ENCODE measurements at regions of chr15 and their contacts with region 1.

Region 1: GRCh38 chr15:92917606-92918407 is 17.7 kb downstream of the CHD2 start:
- DNase-seq: peak; percentile 99
- ATAC-seq: peak; percentile 34
- H3K4me3 Mint-ChIP-seq: no peak overlapping the region
- H3K27ac Mint-ChIP-seq: peak overlapping the region; percentile 87
- H3K4me1 Mint-ChIP-seq: peaks cover 78% of the 10 kb centered on the region
- H3K27me3 Mint-ChIP-seq: no peaks in the 10 kb centered on the region
- CTCF ChIP-seq: peak; percentile 91

Region 2: GRCh38 chr15:92820236-92821021 is 97.4 kb before region 1 on chr15:
- CTCF ChIA-PET with region 1: interaction called, 10 read pairs
- POLR2A ChIA-PET with region 1: interaction called, 3 read pairs
- intact Hi-C with region 1: no loop called
- DNase-seq: peak; percentile 88
- ATAC-seq: peak; percentile 75
- H3K4me3 Mint-ChIP-seq: peak overlapping the region; percentile 82
- H3K27ac Mint-ChIP-seq: peak overlapping the region; percentile 94
- H3K4me1 Mint-ChIP-seq: peaks cover 63% of the 10 kb centered on the region
- H3K27me3 Mint-ChIP-seq: no peaks in the 10 kb centered on the region
- CTCF ChIP-seq: no peak

Region 3: DNA sequence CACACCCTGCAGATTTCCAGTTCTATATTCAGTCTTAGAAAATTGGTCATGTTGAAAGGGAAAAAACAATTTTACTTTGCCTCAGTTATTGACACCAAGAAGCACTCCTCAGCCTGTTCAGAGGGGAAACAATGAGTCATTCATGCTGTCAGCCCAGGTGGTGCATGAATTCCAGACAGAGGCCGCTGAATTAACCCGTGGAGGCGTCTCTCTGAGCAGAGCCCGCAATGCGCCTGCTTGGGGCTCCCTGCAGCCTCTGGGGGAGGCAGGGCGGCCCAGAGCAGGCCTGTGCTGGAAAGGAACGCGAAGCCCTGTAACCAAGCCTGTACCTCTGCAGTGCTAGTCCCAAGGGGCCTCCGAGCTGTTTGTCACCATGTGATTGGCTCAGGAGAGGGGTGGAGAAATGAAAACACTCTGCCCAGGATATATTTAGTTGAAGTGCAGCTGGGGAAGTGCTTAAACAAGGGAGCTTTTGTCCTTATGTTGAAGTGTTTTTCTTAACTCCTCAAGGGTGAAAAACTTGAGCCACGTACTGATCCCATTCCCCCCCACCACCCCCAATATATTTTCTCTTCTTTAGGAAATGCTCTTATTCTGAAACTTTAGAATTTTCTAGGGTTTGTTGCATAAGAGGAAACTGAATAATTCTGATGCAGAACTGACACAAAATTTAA is 86.0 kb before region 1 on chr15:
- CTCF ChIA-PET with region 1: interaction called, 11 read pairs
- POLR2A ChIA-PET with region 1: interaction called, 4 read pairs
- intact Hi-C with region 1: no loop called
- DNase-seq: peak; percentile 96
- ATAC-seq: peak; percentile 96
- H3K4me3 Mint-ChIP-seq: peak overlapping the region; percentile 66
- H3K27ac Mint-ChIP-seq: peak overlapping the region; percentile 95
- H3K4me1 Mint-ChIP-seq: peaks cover 43% of the 10 kb centered on the region
- H3K27me3 Mint-ChIP-seq: no peaks in the 10 kb centered on the region
- CTCF ChIP-seq: no peak

Region 4: GRCh38 chr15:92903941-92904831 is 13.6 kb before region 1 on chr15:
- CTCF ChIA-PET with region 1: interaction called, 42 read pairs
- POLR2A ChIA-PET with region 1: interaction called, 122 read pairs
- intact Hi-C with region 1: no loop called
- DNase-seq: peak; percentile 99
- ATAC-seq: peak; percentile 81
- H3K4me3 Mint-ChIP-seq: peak overlapping the region; percentile 99
- H3K27ac Mint-ChIP-seq: peak overlapping the region; percentile 100
- H3K4me1 Mint-ChIP-seq: peaks cover 49% of the 10 kb centered on the region
- H3K27me3 Mint-ChIP-seq: no peaks in the 10 kb centered on the region
- CTCF ChIP-seq: no peak

Region 5: DNA sequence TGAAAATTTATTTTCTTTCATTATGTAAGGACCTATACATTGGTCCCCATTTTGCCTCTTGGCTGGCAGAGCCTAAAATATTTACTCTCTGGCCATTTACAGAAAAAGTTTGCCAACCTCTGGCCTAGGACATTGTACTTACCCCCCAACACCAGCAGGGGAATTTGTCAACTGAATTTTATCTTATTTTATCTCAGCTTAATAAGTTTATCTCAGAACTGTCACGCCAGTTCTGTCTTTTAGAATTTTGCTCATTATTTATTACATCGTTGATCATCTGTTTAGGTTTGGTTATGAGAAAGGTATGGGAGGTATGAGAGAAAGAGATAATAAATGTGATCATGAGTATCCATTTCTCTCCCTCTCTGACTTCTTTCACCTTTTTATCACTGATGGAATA is 20.6 kb after region 1 on chr15:
- CTCF ChIA-PET with region 1: interaction called, 15 read pairs
- POLR2A ChIA-PET with region 1: interaction called, 5 read pairs
- intact Hi-C with region 1: no loop called
- DNase-seq: no peak
- ATAC-seq: peak; percentile 45
- H3K4me3 Mint-ChIP-seq: no peak overlapping the region
- H3K27ac Mint-ChIP-seq: no peak overlapping the region
- H3K4me1 Mint-ChIP-seq: peaks cover 39% of the 10 kb centered on the region
- H3K27me3 Mint-ChIP-seq: no peaks in the 10 kb centered on the region
- CTCF ChIP-seq: peak; percentile 52

Region 6: DNA sequence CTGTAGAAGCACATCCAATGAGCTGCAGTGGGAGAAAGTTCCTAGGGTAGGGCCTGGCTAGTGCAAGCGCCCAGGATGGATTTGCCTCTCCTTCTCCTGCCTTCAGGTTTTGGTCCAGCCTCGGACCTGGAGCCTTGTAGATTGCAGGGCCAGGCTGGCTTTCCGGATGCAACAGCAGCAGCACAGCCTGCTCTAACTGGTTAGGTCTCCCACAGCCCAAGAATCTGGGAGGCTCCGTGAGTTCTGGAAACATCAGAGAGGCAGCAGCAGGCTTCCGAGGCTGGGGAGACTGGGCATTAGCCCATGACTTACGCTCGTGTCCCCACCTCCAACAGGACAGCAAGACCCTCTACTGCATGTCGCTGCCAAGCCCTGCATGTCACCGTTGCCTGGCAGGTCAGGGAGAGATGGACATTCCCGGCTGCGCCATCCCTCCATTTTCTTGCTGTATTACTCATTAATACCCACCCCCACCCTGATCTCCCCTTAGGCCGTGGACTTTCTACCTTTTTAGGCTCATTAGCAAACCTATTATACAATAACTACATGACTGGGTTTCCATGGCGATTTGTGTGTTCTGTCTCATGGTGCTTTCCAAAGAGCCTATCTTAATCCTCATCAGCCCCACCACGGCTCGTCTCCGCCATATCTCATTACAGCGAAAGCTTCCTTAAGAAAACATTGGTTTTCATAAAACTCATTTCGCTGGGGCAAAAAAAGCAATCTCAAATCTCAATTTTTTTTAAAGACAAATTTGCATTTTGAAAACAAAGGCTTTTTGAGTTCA is 212.1 kb after region 1 on chr15:
- CTCF ChIA-PET with region 1: no interaction called
- POLR2A ChIA-PET with region 1: no interaction called
- intact Hi-C with region 1: no loop called
- DNase-seq: no peak
- ATAC-seq: no peak
- H3K4me3 Mint-ChIP-seq: no peak overlapping the region
- H3K27ac Mint-ChIP-seq: no peak overlapping the region
- H3K4me1 Mint-ChIP-seq: no peaks in the 10 kb centered on the region
- H3K27me3 Mint-ChIP-seq: no peaks in the 10 kb centered on the region
- CTCF ChIP-seq: no peak